ENCODE measurements at regions of chr9 and their contacts with region 1.

Region 1: GRCh38 chr9:96398582-96399324 is 15.2 kb upstream of the SLC35D2 start:
- DNase-seq: peak in 6 of 9 donors; percentile 18 to 47 (median 28)
- ATAC-seq: peak; percentile 75
- H3K4me3 ChIP-seq: peak overlapping the region; percentile 28
- H3K4me3 Mint-ChIP-seq: peak overlapping the region; percentile 58 to 73 (median 68)
- H3K27ac ChIP-seq: peak overlapping the region; percentile 59
- H3K27ac Mint-ChIP-seq: peak overlapping the region; percentile 49 to 96 (median 91)
- H3K4me1 ChIP-seq: peaks cover 16 to 18% of the 10 kb centered on the region in 2 donors
- H3K4me1 Mint-ChIP-seq: peaks cover 15 to 32% (median 26%) of the 10 kb centered on the region in 7 donors
- H3K27me3 ChIP-seq: no peaks in the 10 kb centered on the region
- H3K27me3 Mint-ChIP-seq: no peaks in the 10 kb centered on the region

Region 2: GRCh38 chr9:96256800-96257199 is 142.0 kb before region 1 on chr9:
- CTCF ChIA-PET with region 1: no interaction called
- POLR2A ChIA-PET with region 1: no interaction called
- intact Hi-C with region 1: no loop called
- DNase-seq: no peak
- ATAC-seq: no peak
- H3K4me3 ChIP-seq: no peak overlapping the region
- H3K4me3 Mint-ChIP-seq: no peak overlapping the region
- H3K27ac ChIP-seq: no peak overlapping the region
- H3K27ac Mint-ChIP-seq: peak overlapping the region in 1 of 9 donors; percentile 10
- H3K4me1 ChIP-seq: no peaks in the 10 kb centered on the region
- H3K4me1 Mint-ChIP-seq: peaks cover 0 to 6% (median 4%) of the 10 kb centered on the region in 7 donors
- H3K27me3 ChIP-seq: no peaks in the 10 kb centered on the region
- H3K27me3 Mint-ChIP-seq: peaks cover 12 to 34% (median 24%) of the 10 kb centered on the region in 5 donors

Region 3: GRCh38 chr9:96383165-96383942 is 15.4 kb before region 1 on chr9 and contains the start of gene SLC35D2:
- CTCF ChIA-PET with region 1: interaction called, 4 read pairs
- POLR2A ChIA-PET with region 1: interaction called, 4 read pairs
- intact Hi-C with region 1: loop called in 1 of 2 experiments (anchors 2 kb)
- DNase-seq: peak in 5 of 9 donors; percentile 7 to 32 (median 14)
- ATAC-seq: peak; percentile 69
- H3K4me3 ChIP-seq: peak within 1 kb of the TSS; percentile 58
- H3K4me3 Mint-ChIP-seq: peak within 1 kb of the TSS; percentile 82 to 89 (median 86)
- H3K27ac ChIP-seq: peak within 1 kb of the TSS; percentile 56
- H3K27ac Mint-ChIP-seq: peak within 1 kb of the TSS; percentile 43 to 86 (median 76)
- H3K4me1 ChIP-seq: peaks cover 0 to 9% of the 10 kb centered on the region in 2 donors
- H3K4me1 Mint-ChIP-seq: peaks cover 10 to 42% (median 27%) of the 10 kb centered on the region in 7 donors
- H3K27me3 ChIP-seq: no peaks in the 10 kb centered on the region
- H3K27me3 Mint-ChIP-seq: no peaks in the 10 kb centered on the region
- total RNA-seq, gene SLC35D2: 9.7 to 20.2 (median 19.1) TPM

Region 4: GRCh38 chr9:96449845-96450612 is 51.3 kb after region 1 on chr9 and contains the start of gene HABP4:
- CTCF ChIA-PET with region 1: no interaction called
- POLR2A ChIA-PET with region 1: interaction called, 18 read pairs
- intact Hi-C with region 1: no loop called
- DNase-seq: peak; percentile 90 to 97 (median 95)
- ATAC-seq: peak; percentile 98
- H3K4me3 ChIP-seq: peak within 1 kb of the TSS; percentile 77
- H3K4me3 Mint-ChIP-seq: peak within 1 kb of the TSS; percentile 88 to 99 (median 93)
- H3K27ac ChIP-seq: peak within 1 kb of the TSS; percentile 74
- H3K27ac Mint-ChIP-seq: peak within 1 kb of the TSS; percentile 74 to 98 (median 94)
- H3K4me1 ChIP-seq: peaks cover 5 to 14% of the 10 kb centered on the region in 2 donors
- H3K4me1 Mint-ChIP-seq: peaks cover 19 to 33% (median 26%) of the 10 kb centered on the region in 7 donors
- H3K27me3 ChIP-seq: no peaks in the 10 kb centered on the region
- H3K27me3 Mint-ChIP-seq: peaks cover 0 to 41% (median 6%) of the 10 kb centered on the region in 5 donors
- total RNA-seq, gene HABP4: 6.6 to 40.3 (median 23.9) TPM

Region 5: DNA sequence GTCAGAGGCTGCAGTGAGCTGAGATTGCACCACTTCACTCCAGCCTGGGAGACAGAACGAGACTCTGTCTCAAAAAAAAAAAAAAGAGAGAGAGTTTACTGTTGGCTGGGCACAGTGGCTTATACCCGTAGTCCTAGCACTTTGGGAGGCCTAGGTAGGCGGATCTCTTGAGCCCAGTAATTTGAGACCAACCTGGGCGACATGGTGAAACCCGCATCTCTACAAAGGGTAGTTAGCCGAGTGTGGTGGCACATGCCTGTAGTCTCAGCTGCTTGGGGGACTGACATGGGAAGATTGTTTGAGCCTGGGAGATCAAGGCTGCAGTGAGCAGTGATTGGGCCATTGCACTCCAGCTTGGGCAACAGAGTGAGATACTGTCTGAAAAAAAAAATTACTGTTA is 63.8 kb after region 1 on chr9:
- CTCF ChIA-PET with region 1: no interaction called
- POLR2A ChIA-PET with region 1: no interaction called
- intact Hi-C with region 1: no loop called
- DNase-seq: no peak
- ATAC-seq: no peak
- H3K4me3 ChIP-seq: no peak overlapping the region
- H3K4me3 Mint-ChIP-seq: no peak overlapping the region
- H3K27ac ChIP-seq: no peak overlapping the region
- H3K27ac Mint-ChIP-seq: no peak overlapping the region
- H3K4me1 ChIP-seq: no peaks in the 10 kb centered on the region
- H3K4me1 Mint-ChIP-seq: peaks cover 0 to 13% (median 4%) of the 10 kb centered on the region in 7 donors
- H3K27me3 ChIP-seq: no peaks in the 10 kb centered on the region
- H3K27me3 Mint-ChIP-seq: no peaks in the 10 kb centered on the region

Region 6: DNA sequence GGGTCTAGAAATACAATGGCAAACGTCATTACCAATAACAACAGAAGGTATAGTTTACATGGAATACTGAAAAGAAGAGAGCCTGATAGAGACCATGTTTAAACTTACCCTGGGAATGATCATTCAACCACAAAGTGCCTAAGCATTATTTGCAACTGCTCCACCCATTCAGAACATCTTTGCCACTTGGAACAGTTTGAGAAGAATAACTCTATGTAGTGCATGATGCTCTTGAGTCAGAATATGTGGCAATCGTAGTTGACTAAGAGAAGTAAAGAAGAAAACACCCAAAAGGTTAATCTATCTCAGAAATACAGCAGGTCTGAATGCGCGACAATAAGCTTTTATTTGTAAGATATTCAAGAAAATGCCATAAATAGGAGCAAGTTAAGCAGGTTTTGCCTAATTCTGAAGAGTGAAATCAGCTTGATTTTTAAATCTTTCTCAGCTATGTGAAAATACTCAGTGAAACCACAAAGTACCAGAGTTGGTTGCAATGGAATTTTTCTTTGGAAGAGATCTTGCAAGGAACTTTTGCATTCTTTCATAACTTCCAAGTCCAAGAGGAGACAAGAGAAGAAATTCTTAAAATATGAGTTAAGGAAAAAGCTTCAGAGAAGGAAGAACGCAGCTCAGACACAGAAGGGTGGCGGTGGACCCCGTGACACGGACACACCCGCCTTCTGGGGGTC is 115.5 kb after region 1 on chr9:
- CTCF ChIA-PET with region 1: no interaction called
- POLR2A ChIA-PET with region 1: no interaction called
- intact Hi-C with region 1: no loop called
- DNase-seq: no peak
- ATAC-seq: no peak
- H3K4me3 ChIP-seq: no peak overlapping the region
- H3K4me3 Mint-ChIP-seq: no peak overlapping the region
- H3K27ac ChIP-seq: no peak overlapping the region
- H3K27ac Mint-ChIP-seq: no peak overlapping the region
- H3K4me1 ChIP-seq: no peaks in the 10 kb centered on the region
- H3K4me1 Mint-ChIP-seq: peaks cover 4 to 11% (median 4%) of the 10 kb centered on the region in 7 donors
- H3K27me3 ChIP-seq: no peaks in the 10 kb centered on the region
- H3K27me3 Mint-ChIP-seq: no peaks in the 10 kb centered on the region